ENCODE measurements at regions of chr1 and their contacts with region 1.

Region 1: GRCh38 chr1:234963180-234963903 is 165.3 kb downstream of the TOMM20 start:
- DNase-seq: peak; percentile 99
- ATAC-seq: peak; percentile 70
- H3K4me3 ChIP-seq: peak overlapping the region in 2 of 3 experiments; percentile 33 to 55; a peak in 2 of 6 replicates
- H3K27ac ChIP-seq: peak overlapping the region; percentile 100
- H3K4me1 ChIP-seq: peaks cover 78% of the 10 kb centered on the region
- H3K27me3 ChIP-seq: no peaks in the 10 kb centered on the region
- CTCF ChIP-seq: no peak
- EP300 ChIP-seq: peak in 1 of 2 experiments; percentile 98; a peak in 2 of 4 replicates
- POLR2A ChIP-seq: peak; percentile 70 to 80
- RAD21 ChIP-seq: peak; percentile 26; the same call in 1 of the 2 replicates

Region 2: DNA sequence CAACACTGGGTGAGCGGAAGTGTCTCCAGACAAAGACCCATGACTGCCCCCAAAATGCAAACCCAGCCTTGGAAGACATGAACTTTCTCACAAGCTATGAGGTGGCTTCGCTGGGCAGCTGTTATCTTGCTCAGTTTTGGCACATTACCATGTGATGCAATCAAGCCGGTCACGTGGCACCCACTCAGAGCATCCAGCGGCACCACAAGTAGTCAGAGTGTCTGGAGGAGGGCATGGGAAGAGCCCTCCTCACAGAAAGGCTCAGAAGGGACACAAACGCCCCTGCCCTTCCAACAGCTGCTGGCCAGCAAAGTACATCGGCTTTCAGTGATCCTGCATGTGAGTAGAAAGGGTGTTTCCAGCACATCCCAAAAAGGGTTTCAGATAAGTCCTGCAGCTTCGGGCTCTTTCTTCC is 207.9 kb before region 1 on chr1:
- CTCF ChIA-PET with region 1: no interaction called
- POLR2A ChIA-PET with region 1: interaction called, 4 read pairs
- in situ Hi-C with region 1: loop called (anchors 10 kb)
- intact Hi-C with region 1: loop called (anchors 1 kb)
- DNase-seq: no peak
- ATAC-seq: no peak
- H3K4me3 ChIP-seq: no peak overlapping the region
- H3K27ac ChIP-seq: no peak overlapping the region
- H3K4me1 ChIP-seq: peaks cover 55% of the 10 kb centered on the region
- H3K27me3 ChIP-seq: no peaks in the 10 kb centered on the region
- CTCF ChIP-seq: no peak
- EP300 ChIP-seq: no peak
- POLR2A ChIP-seq: no peak
- RAD21 ChIP-seq: no peak

Region 3: DNA sequence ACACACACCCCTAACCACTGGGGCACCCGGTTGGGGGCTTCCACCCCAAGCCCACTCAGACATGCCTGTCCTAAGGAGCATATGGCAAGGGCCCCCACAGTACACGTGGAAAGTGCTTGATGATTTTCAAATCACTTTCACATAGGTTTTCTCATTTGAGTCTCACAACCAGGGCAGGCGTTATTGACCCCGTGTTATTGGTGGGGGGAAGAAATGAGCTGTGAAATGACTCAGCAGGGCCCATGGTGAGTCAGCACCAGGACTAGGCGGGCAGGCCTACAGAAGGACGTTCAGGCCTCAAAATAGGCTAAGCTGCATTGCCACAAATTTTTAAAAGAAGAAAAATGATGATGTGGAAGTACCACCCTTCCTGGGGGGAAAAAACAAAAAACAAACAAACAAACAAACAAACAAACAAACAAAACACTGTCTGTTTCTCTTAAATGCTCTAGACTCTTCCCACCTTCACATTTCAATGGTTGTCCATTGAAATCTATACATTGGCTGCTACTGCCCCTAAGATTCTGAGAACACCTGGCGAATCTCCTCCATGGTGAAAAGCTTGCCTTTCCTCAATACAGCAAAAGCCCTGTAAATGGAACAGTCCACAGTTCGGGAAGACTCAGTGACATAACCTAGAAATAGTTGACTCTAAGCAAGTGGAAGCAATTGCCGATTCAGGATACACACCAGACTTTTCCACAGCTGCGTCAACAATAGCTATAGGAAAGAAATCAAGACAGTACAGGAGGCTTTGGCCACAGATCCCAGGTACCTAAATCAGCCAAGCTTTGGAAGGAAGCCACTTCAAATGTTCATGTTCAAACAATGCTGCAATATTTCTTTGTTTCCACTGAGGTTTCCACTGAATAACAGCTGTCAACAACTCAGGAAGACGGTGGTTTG is 69.4 kb before region 1 on chr1:
- CTCF ChIA-PET with region 1: no interaction called
- POLR2A ChIA-PET with region 1: no interaction called
- in situ Hi-C with region 1: no loop called
- intact Hi-C with region 1: no loop called
- DNase-seq: peak; percentile 20
- ATAC-seq: no peak
- H3K4me3 ChIP-seq: no peak overlapping the region
- H3K27ac ChIP-seq: no peak overlapping the region
- H3K4me1 ChIP-seq: peaks cover 52% of the 10 kb centered on the region
- H3K27me3 ChIP-seq: no peaks in the 10 kb centered on the region
- CTCF ChIP-seq: no peak
- EP300 ChIP-seq: no peak; a peak in 1 of 4 replicates
- POLR2A ChIP-seq: no peak
- RAD21 ChIP-seq: no peak

Region 4: DNA sequence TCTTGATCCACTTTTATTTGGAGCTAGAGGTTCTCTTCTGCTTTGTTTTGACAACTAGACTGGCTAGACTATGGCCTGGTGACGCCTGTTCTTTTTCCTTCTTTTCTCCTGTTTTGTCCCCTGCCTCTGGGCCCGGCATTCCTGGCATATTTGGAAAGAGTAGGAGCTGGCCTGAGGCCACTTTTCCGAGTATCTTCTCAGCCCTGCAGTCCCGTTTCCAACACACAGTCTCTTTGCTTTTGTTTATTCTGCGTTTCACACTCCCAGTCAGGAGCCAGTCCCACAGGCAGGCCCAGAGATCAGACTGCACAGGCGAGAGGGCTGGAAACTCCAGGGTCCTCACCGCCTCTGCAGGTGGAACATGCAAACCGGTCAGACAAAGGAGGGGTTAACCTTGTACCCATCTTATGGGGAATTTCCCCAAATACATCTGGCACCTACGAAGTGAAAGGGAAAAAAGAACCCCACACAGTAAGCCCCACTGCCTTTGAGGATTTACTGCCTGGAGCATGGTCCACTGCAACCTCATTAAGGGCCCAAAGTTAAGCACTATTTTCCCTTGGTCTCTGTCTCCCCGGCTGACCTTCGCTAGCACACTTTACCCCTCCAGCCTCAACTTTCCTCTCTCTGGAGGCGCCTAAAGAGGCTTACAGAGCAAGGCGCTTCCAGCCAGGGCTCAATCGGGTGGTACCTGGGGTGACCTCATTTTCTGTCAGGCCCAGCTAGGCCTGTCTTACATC is 24.2 kb after region 1 on chr1:
- CTCF ChIA-PET with region 1: no interaction called
- POLR2A ChIA-PET with region 1: interaction called, 39 read pairs
- in situ Hi-C with region 1: no loop called
- intact Hi-C with region 1: no loop called
- DNase-seq: peak; percentile 95
- ATAC-seq: peak; percentile 97
- H3K4me3 ChIP-seq: peak overlapping the region; percentile 13 to 53 (median 24); a peak in 4 of 6 replicates
- H3K27ac ChIP-seq: peak overlapping the region; percentile 95
- H3K4me1 ChIP-seq: peaks cover 93% of the 10 kb centered on the region
- H3K27me3 ChIP-seq: no peaks in the 10 kb centered on the region
- CTCF ChIP-seq: 0 out of 2 replicates have a peak, but pooled peaks have one; percentile 9
- EP300 ChIP-seq: peak; percentile 62 to 68; a peak in 2 of 4 replicates
- POLR2A ChIP-seq: peak; percentile 55 to 80; a peak in 3 of 4 replicates
- RAD21 ChIP-seq: 0 out of 2 replicates have a peak, but pooled peaks have one; percentile 19

Region 5: GRCh38 chr1:235004276-235004675 is 40.9 kb after region 1 on chr1:
- CTCF ChIA-PET with region 1: no interaction called
- POLR2A ChIA-PET with region 1: no interaction called
- in situ Hi-C with region 1: no loop called
- intact Hi-C with region 1: no loop called
- DNase-seq: no peak
- ATAC-seq: no peak
- H3K4me3 ChIP-seq: no peak overlapping the region
- H3K27ac ChIP-seq: no peak overlapping the region
- H3K4me1 ChIP-seq: peaks cover 11% of the 10 kb centered on the region
- H3K27me3 ChIP-seq: no peaks in the 10 kb centered on the region
- CTCF ChIP-seq: no peak
- EP300 ChIP-seq: no peak
- POLR2A ChIP-seq: no peak
- RAD21 ChIP-seq: no peak

Region 6: GRCh38 chr1:235067263-235068172 is 104.2 kb after region 1 on chr1:
- CTCF ChIA-PET with region 1: no interaction called
- POLR2A ChIA-PET with region 1: interaction called, 100 read pairs
- in situ Hi-C with region 1: no loop called
- intact Hi-C with region 1: no loop called
- DNase-seq: peak; percentile 58
- ATAC-seq: peak; percentile 4; the same call in 2 of the 3 replicates
- H3K4me3 ChIP-seq: peak overlapping the region; percentile 41 to 76 (median 60); a peak in 5 of 6 replicates
- H3K27ac ChIP-seq: peak overlapping the region; percentile 86
- H3K4me1 ChIP-seq: peaks cover 97% of the 10 kb centered on the region
- H3K27me3 ChIP-seq: no peaks in the 10 kb centered on the region
- CTCF ChIP-seq: no peak
- EP300 ChIP-seq: no peak
- POLR2A ChIP-seq: peak in 1 of 2 experiments; percentile 21; a peak in 2 of 4 replicates
- RAD21 ChIP-seq: no peak

Region 7: DNA sequence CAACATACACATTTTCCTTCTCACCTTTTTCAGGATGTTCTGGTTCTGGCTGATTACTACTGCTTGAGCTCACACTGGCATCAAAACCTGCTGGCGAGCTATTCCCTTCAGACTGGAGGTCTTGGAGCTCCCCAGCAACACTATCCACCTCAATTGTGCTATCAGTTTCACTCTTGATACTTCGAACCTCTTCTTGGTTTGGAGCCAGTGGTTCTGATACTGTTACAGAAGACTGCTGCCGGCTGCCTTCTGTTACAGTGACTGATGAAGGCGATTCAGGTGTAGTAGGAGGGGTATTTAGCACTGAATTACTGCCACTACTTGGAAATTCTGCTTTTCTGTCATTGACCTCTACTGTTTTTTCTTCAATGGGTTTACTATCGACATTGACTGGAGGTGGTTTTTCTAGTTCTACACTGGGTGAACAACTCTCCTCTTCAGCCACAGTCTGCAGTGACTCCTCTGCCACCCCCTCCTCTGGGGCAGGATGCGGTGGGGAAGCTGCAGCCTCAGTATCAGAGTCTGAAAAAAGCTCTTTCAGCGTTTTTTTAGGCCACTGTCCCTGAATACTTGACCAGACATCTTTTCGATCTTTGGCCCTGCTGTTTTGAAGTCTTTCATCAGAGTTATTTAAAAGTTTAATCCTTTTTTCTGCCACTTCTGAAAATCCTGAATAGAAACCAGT is 218.4 kb after region 1 on chr1:
- CTCF ChIA-PET with region 1: no interaction called
- POLR2A ChIA-PET with region 1: no interaction called
- in situ Hi-C with region 1: no loop called
- intact Hi-C with region 1: no loop called
- DNase-seq: no peak
- ATAC-seq: no peak
- H3K4me3 ChIP-seq: no peak overlapping the region
- H3K27ac ChIP-seq: no peak overlapping the region
- H3K4me1 ChIP-seq: no peaks in the 10 kb centered on the region
- H3K27me3 ChIP-seq: no peaks in the 10 kb centered on the region
- CTCF ChIP-seq: no peak
- EP300 ChIP-seq: no peak
- POLR2A ChIP-seq: no peak
- RAD21 ChIP-seq: no peak

Region 8: GRCh38 chr1:236433819-236434315 is 1470.5 kb after region 1 on chr1:
- CTCF ChIA-PET with region 1: no interaction called
- POLR2A ChIA-PET with region 1: no interaction called
- in situ Hi-C with region 1: no loop called
- intact Hi-C with region 1: no loop called
- DNase-seq: no peak
- ATAC-seq: no peak
- H3K4me3 ChIP-seq: no peak overlapping the region
- H3K27ac ChIP-seq: no peak overlapping the region
- H3K4me1 ChIP-seq: no peaks in the 10 kb centered on the region
- H3K27me3 ChIP-seq: no peaks in the 10 kb centered on the region
- CTCF ChIP-seq: no peak
- EP300 ChIP-seq: no peak
- POLR2A ChIP-seq: no peak
- RAD21 ChIP-seq: no peak